ENCODE measurements at regions of chr15 and their contacts with region 1.

Region 1: DNA sequence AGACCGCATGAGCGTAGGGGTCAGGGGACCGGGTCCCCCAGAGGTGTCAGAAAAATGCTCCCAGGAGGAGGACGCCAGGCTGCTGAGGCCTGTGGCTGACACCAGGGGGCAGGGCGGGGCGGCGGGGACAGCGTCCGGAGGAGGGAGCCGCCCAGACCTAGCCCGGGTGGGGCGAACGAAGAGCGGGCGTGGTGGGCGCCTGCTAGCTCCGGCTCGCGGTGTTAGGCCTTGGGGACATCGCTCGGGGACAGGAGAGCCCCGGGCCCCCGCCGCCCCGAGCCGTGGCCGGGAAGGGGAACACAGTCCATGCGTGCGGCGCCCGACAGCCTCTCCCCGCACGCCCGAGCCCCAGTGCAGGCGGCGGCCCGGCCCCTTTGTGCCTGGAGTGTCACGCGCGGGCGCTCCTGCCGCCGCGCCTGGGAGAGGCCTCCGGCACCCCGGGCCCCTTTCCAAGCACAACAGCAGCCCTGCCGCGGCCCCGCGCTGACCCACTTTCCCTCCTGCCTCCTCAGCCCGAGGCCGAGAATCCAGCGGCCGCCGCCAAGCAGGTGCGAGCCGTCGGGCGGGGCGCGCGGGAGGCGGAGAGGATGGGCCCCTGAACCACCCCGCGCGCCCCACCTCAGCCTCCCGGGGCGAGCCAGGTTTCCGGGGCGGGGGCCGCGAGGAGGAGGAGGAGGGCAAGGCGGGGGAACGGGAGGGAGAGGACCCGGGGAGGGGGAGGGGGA is 111.0 kb upstream of the KLF13 start:
- DNase-seq: peak; percentile 94
- H3K4me3 Mint-ChIP-seq: peak overlapping the region; percentile 87
- H3K27ac Mint-ChIP-seq: peak overlapping the region; percentile 71
- H3K4me1 Mint-ChIP-seq: peaks cover 36% of the 10 kb centered on the region
- H3K27me3 Mint-ChIP-seq: no peaks in the 10 kb centered on the region

Region 2: GRCh38 chr15:31265871-31266711 is 50.4 kb after region 1 on chr15:
- intact Hi-C with region 1: loop called (anchors 1 kb)
- DNase-seq: peak; percentile 94
- H3K4me3 Mint-ChIP-seq: peak overlapping the region; percentile 68
- H3K27ac Mint-ChIP-seq: peak overlapping the region; percentile 78
- H3K4me1 Mint-ChIP-seq: peaks cover 87% of the 10 kb centered on the region
- H3K27me3 Mint-ChIP-seq: no peaks in the 10 kb centered on the region